ENCODE measurements at regions of chrX and their contacts with region 1.

Region 1: GRCh38 chrX:107102975-107103374 is 15.6 kb downstream of the RBM41 start:
- DNase-seq: peak; percentile 2
- H3K4me3 ChIP-seq: no peak overlapping the region
- H3K27ac ChIP-seq: no peak overlapping the region
- H3K4me1 ChIP-seq: no peaks in the 10 kb centered on the region
- H3K27me3 ChIP-seq: no peaks in the 10 kb centered on the region
- CTCF ChIP-seq: peak; percentile 6 to 46

Region 2: DNA sequence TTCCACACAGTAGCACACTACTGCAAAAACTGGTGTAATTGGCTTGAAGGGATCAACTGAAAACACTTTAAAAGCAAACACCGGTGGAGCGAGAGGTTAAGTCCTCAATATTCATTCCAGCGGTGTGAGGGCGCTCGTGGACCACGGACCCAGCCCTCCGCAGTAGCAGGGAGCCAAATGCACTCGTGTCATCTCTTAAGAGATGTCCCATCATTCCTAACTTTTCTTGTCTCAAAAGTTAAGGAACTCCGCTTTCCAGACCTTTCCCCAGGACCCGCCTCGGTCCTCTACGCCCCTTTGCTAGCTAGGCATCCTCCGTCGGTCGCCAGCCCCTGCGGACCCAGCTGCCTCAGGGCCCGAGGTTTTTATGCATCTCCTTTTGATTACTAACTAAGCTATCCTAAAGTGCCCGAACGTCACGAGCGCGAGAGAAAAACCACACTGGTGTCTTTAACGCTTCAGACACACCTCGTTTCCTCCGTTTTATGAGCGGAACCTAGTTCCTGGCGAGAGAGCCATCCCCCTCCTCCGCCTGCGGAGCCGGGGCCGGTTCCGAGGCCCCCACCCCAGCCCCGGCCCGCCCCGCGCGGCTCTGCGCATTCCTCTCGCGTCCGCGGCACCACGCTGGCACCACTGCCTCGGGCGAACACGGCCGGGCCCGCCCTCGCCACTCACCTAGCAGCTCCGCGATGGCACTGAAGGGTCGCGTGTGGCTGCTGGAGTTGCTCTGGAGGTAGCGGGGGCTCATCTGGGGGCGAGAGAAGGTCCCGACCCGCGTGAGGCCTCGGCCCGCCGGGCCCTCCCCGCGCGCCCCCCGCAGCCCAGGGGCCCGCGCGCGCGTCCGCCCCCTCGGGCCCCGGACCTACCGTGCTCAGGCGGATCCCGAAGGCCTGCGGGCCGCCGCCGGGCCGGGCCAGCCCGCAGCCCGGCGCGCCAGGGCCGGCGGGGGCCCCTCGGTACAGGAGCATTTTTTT is 103.7 kb before region 1 on chrX:
- CTCF ChIA-PET with region 1: no interaction called
- dilution Hi-C with region 1: no loop called
- in situ Hi-C with region 1: no loop called
- intact Hi-C with region 1: loop called (anchors 10 kb)
- DNase-seq: peak; percentile 47
- H3K4me3 ChIP-seq: peak overlapping the region; percentile 56 to 63 (median 60)
- H3K27ac ChIP-seq: no peak overlapping the region
- H3K4me1 ChIP-seq: no peaks in the 10 kb centered on the region
- H3K27me3 ChIP-seq: no peaks in the 10 kb centered on the region
- CTCF ChIP-seq: peak; percentile 17 to 68

Measured in mammary epithelial cell (primary cell).